Natural killer cell (primary cell): ENCODE measurements at regions of chr15 and their contacts with region 1.

Region 1: DNA sequence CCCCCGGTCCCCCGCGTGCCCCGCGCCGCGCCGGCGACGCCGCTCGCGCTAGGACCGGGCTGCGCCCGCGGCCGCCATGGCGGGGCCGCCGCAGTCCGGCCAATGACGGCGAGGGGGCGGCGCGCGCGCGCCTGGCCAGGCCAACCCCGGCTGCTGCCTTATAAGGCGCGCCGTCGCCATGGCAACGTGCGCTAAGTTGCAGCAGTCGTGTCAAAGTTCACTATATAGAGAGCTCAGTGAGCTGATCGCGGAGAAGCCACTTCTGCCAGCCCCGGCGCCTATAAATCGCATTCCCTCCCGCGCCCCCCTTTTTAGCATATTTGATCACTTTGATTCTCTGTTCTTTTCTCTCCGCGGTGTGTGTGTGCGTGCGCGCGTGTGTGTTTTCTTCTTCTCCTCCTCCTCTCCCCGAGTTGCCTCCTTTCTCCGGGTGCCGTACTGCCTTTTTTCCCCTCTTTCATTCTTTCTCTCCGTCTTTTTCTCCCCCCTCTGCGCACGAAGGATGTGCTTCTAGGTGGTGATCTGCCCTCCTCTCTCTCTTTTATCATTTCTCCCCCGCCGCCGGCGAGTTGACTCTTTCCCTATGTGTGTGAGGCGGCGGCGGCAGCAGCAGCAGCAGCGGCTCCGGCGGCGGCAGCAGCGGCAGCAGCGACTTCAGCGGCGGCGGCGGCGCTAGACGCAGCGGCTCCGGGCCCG is at the start of gene NR2F2:
- DNase-seq: peak; percentile 64 to 67
- ATAC-seq: peak; percentile 77 to 88 (median 85)
- H3K4me3 ChIP-seq: peak within 1 kb of the TSS; percentile 32
- H3K4me3 Mint-ChIP-seq: peak within 1 kb of the TSS; percentile 93
- H3K27ac ChIP-seq: no peak within 1 kb of the TSS
- H3K27ac Mint-ChIP-seq: peak within 1 kb of the TSS; percentile 8 to 73
- H3K4me1 ChIP-seq: peaks cover 33% of the 10 kb centered on the region
- H3K4me1 Mint-ChIP-seq: peaks cover 28 to 39% of the 10 kb centered on the region in 2 donors
- H3K27me3 ChIP-seq: peaks cover 77% of the 10 kb centered on the region
- H3K27me3 Mint-ChIP-seq: peaks cover 65 to 74% of the 10 kb centered on the region in 2 donors
- CTCF ChIP-seq: no peak
- total RNA-seq, gene NR2F2: not detected

Region 2: GRCh38 chr15:96011136-96011535 is 319.5 kb before region 1 on chr15:
- intact Hi-C with region 1: no loop called
- DNase-seq: no peak
- ATAC-seq: no peak
- H3K4me3 ChIP-seq: no peak overlapping the region
- H3K4me3 Mint-ChIP-seq: no peak overlapping the region
- H3K27ac ChIP-seq: no peak overlapping the region
- H3K27ac Mint-ChIP-seq: no peak overlapping the region
- H3K4me1 ChIP-seq: no peaks in the 10 kb centered on the region
- H3K4me1 Mint-ChIP-seq: no peaks in the 10 kb centered on the region
- H3K27me3 ChIP-seq: peaks cover 6% of the 10 kb centered on the region
- H3K27me3 Mint-ChIP-seq: peaks cover 56 to 90% of the 10 kb centered on the region in 2 donors
- CTCF ChIP-seq: no peak

Region 3: GRCh38 chr15:96356494-96357455 is 26.2 kb after region 1 on chr15:
- intact Hi-C with region 1: loop called (anchors 2 kb)
- DNase-seq: peak; percentile 74 to 77
- ATAC-seq: peak; percentile 74 to 89 (median 87)
- H3K4me3 ChIP-seq: peak overlapping the region; percentile 34
- H3K4me3 Mint-ChIP-seq: peak overlapping the region; percentile 97
- H3K27ac ChIP-seq: no peak overlapping the region
- H3K27ac Mint-ChIP-seq: peak overlapping the region; percentile 40 to 86
- H3K4me1 ChIP-seq: peaks cover 18% of the 10 kb centered on the region
- H3K4me1 Mint-ChIP-seq: peaks cover 21 to 22% of the 10 kb centered on the region in 2 donors
- H3K27me3 ChIP-seq: peaks cover 94% of the 10 kb centered on the region
- H3K27me3 Mint-ChIP-seq: peaks cover 52 to 57% of the 10 kb centered on the region in 2 donors
- CTCF ChIP-seq: peak; percentile 92